ENCODE measurements at regions of chr12 and their contacts with region 1.

Region 1: DNA sequence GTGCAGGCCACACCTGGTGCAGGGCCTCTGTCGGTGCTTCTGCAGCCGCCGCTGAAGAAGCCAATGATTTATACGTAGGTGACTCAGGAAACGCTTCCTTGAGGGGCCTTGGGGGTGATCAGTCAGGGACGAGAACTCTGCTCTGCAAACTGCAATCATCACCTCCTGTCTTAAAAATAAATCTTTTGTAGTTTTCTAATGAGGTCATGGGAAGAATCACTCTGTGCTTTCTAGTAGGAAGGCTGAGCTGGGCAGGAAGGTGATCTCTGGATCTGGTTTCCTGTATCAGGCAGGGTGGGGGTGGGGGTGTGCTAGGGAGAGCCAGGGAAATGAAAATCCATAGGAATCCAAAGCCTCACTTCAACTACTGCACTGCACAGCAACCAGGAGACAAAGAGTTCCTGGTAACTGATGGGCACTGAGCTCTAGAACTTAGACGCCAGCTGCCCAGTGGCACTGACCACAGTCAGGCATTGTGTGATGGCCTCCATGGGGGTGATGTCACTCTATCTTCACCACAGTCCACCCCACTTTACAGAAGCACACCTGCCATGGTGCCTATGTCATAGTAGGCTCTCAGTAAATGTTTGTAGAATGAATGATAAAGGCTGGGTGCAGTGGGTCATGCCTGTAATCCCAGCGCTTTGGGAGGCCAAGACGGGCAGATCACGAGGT is 292.4 kb upstream of the PWP1 start:
- DNase-seq: peak in 6 of 9 donors; percentile 32 to 56 (median 49)
- ATAC-seq: peak; percentile 44
- H3K4me3 ChIP-seq: no peak overlapping the region
- H3K4me3 Mint-ChIP-seq: peak overlapping the region; percentile 5 to 67 (median 58)
- H3K27ac ChIP-seq: peak overlapping the region; percentile 5
- H3K27ac Mint-ChIP-seq: peak overlapping the region in 8 of 9 donors; percentile 80 to 94 (median 87)
- H3K4me1 ChIP-seq: peaks cover 0 to 47% of the 10 kb centered on the region in 2 donors
- H3K4me1 Mint-ChIP-seq: peaks cover 39 to 96% (median 91%) of the 10 kb centered on the region in 7 donors
- H3K27me3 ChIP-seq: no peaks in the 10 kb centered on the region
- H3K27me3 Mint-ChIP-seq: no peaks in the 10 kb centered on the region

Region 2: GRCh38 chr12:107372229-107372658 is 20.9 kb before region 1 on chr12:
- CTCF ChIA-PET with region 1: interaction called, 4 read pairs
- POLR2A ChIA-PET with region 1: interaction called, 10 read pairs
- intact Hi-C with region 1: loop called in 1 of 2 experiments (anchors 2 kb)
- DNase-seq: peak in 8 of 9 donors; percentile 37 to 74 (median 68)
- ATAC-seq: peak; percentile 76
- H3K4me3 ChIP-seq: peak overlapping the region; percentile 20
- H3K4me3 Mint-ChIP-seq: peak overlapping the region; percentile 63 to 85 (median 81)
- H3K27ac ChIP-seq: peak overlapping the region; percentile 64
- H3K27ac Mint-ChIP-seq: peak overlapping the region; percentile 88 to 96 (median 94)
- H3K4me1 ChIP-seq: peaks cover 50 to 73% of the 10 kb centered on the region in 2 donors
- H3K4me1 Mint-ChIP-seq: peaks cover 68 to 89% (median 86%) of the 10 kb centered on the region in 7 donors
- H3K27me3 ChIP-seq: no peaks in the 10 kb centered on the region
- H3K27me3 Mint-ChIP-seq: no peaks in the 10 kb centered on the region

Measured in naive thymus-derived CD4-positive, alpha-beta T cell (primary cell).